GM12878 (cell line): ENCODE measurements at regions of chr3 and their contacts with region 1.

Region 1: DNA sequence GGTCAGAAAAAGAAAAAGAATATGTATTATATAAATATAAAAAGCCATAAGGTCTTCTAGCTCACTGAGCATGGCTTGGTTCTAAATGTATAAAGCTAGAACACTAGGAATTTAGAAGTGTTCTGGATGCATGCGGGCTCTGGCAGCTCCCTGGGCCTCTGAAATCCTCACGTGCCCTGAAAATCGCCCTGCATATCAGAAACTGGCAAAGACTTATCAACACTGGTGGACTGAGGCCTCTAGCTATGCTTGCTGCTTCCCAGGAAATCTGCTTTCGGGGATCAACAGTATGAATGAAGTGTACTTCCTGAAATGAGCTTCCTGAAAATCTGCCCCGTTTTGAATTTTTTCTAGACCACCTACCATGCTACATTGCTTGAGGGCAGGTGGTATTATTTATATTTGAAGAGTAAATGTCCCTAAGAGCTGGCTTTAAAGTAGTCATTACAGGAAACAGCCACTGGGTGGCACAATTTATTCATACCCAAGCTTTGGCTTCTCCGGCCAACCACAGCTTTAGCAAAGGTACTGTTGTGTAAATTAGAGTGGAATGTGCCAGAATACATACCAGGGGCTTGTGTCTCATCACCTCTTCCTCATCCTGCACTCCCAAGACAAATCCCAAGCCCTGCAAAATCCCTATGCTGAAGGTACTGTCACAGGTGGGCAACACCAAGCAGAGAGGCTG is 17.7 kb downstream of the CRTAP start:
- DNase-seq: no peak
- ATAC-seq: peak; percentile 92
- H3K4me3 ChIP-seq: no peak overlapping the region
- H3K27ac ChIP-seq: no peak overlapping the region
- H3K4me1 ChIP-seq: no peaks in the 10 kb centered on the region
- H3K27me3 ChIP-seq: no peaks in the 10 kb centered on the region
- CTCF ChIP-seq: peak; percentile 55 to 85 (median 72)
- EP300 ChIP-seq: no peak
- POLR2A ChIP-seq: no peak
- RAD21 ChIP-seq: peak; percentile 93

Region 2: GRCh38 chr3:33047842-33048834 is 83.3 kb before region 1 on chr3:
- CTCF ChIA-PET with region 1: no interaction called
- POLR2A ChIA-PET with region 1: no interaction called
- RAD21 ChIA-PET with region 1: no interaction called
- SMC1A ChIA-PET with region 1: no interaction called
- in situ Hi-C with region 1: no loop called
- intact Hi-C with region 1: no loop called
- DNase-seq: no peak
- ATAC-seq: peak; percentile 91
- H3K4me3 ChIP-seq: no peak overlapping the region
- H3K27ac ChIP-seq: peak overlapping the region; percentile 11
- H3K4me1 ChIP-seq: peaks cover 32% of the 10 kb centered on the region
- H3K27me3 ChIP-seq: no peaks in the 10 kb centered on the region
- CTCF ChIP-seq: no peak
- EP300 ChIP-seq: no peak
- POLR2A ChIP-seq: no peak
- RAD21 ChIP-seq: no peak

Region 3: GRCh38 chr3:33113772-33114621 is 17.5 kb before region 1 on chr3 and contains the start of gene CRTAP:
- CTCF ChIA-PET with region 1: interaction called, 36 read pairs
- POLR2A ChIA-PET with region 1: interaction called, 3 read pairs
- RAD21 ChIA-PET with region 1: interaction called, 5 read pairs
- SMC1A ChIA-PET with region 1: interaction called, 5 read pairs
- in situ Hi-C with region 1: no loop called
- intact Hi-C with region 1: no loop called
- DNase-seq: peak; percentile 45
- ATAC-seq: peak; percentile 92
- H3K4me3 ChIP-seq: peak within 1 kb of the TSS; percentile 75
- H3K27ac ChIP-seq: peak within 1 kb of the TSS; percentile 43
- H3K4me1 ChIP-seq: peaks cover 24% of the 10 kb centered on the region
- H3K27me3 ChIP-seq: no peaks in the 10 kb centered on the region
- CTCF ChIP-seq: no peak
- EP300 ChIP-seq: no peak
- POLR2A ChIP-seq: peak; percentile 87
- RAD21 ChIP-seq: no peak
- polyA plus RNA-seq, gene CRTAP: 6.0 to 6.2 TPM

Region 4: GRCh38 chr3:33250712-33251111 is 119.2 kb after region 1 on chr3:
- CTCF ChIA-PET with region 1: interaction called, 5 read pairs
- POLR2A ChIA-PET with region 1: no interaction called
- RAD21 ChIA-PET with region 1: interaction called, 5 read pairs
- SMC1A ChIA-PET with region 1: interaction called, 5 read pairs
- in situ Hi-C with region 1: no loop called
- intact Hi-C with region 1: loop called (anchors 1 kb)
- DNase-seq: no peak
- ATAC-seq: no peak
- H3K4me3 ChIP-seq: no peak overlapping the region
- H3K27ac ChIP-seq: no peak overlapping the region
- H3K4me1 ChIP-seq: no peaks in the 10 kb centered on the region
- H3K27me3 ChIP-seq: no peaks in the 10 kb centered on the region
- CTCF ChIP-seq: no peak
- EP300 ChIP-seq: no peak
- POLR2A ChIP-seq: no peak
- RAD21 ChIP-seq: no peak

Region 5: DNA sequence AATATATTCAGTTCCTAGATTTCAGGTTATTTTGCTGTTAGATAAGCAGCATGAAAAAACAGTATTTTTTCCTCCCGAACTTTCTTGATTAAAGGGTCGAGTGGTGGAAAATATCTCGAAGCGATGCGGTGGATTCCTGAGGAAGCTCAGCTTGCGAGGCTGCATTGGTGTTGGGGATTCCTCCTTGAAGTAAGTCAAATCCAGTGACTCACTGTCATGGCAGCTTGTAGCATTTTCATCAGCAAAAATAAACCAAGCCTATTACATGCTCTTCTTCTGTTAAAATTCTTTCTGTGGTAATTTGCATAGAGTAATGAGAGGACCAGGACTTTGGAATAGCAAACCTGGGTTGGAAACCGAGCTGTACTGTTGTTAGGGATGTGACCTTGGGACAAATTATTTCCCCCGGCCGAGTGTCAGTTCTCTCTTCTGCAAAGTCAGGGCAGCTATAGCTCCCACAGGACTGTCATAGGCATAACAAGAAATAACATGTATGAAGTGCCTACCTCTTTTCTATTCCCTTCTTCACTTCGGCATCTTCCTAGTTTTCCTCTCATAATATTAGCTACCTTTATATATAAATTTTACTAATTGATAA is 233.2 kb after region 1 on chr3:
- CTCF ChIA-PET with region 1: interaction called, 9 read pairs
- POLR2A ChIA-PET with region 1: no interaction called
- RAD21 ChIA-PET with region 1: interaction called, 6 read pairs
- SMC1A ChIA-PET with region 1: interaction called, 17 read pairs
- in situ Hi-C with region 1: no loop called
- intact Hi-C with region 1: no loop called
- DNase-seq: no peak
- ATAC-seq: no peak
- H3K4me3 ChIP-seq: no peak overlapping the region
- H3K27ac ChIP-seq: no peak overlapping the region
- H3K4me1 ChIP-seq: no peaks in the 10 kb centered on the region
- H3K27me3 ChIP-seq: no peaks in the 10 kb centered on the region
- CTCF ChIP-seq: no peak
- EP300 ChIP-seq: no peak
- POLR2A ChIP-seq: no peak
- RAD21 ChIP-seq: no peak

Region 6: DNA sequence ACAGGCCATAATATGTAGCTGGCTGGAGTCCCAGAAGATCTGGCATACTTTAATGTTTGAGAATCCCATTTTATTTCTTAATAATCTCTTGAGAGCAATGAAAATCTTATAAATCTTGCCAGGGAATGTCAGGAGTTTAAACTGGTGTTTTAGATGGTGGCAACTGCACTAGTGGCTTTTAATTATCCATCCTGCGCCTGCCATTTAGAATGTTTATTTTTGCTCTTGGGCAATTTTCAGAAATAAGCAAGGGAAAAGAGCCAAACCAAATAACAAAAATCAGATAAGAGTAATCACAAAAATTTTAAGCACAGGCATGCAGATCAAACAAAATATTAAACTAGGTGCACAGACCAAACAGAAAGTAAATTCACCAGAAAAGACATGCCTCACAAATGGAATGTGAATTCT is 350.6 kb after region 1 on chr3:
- CTCF ChIA-PET with region 1: no interaction called
- POLR2A ChIA-PET with region 1: no interaction called
- RAD21 ChIA-PET with region 1: no interaction called
- SMC1A ChIA-PET with region 1: no interaction called
- in situ Hi-C with region 1: no loop called
- intact Hi-C with region 1: no loop called
- DNase-seq: no peak
- ATAC-seq: no peak
- H3K4me3 ChIP-seq: no peak overlapping the region
- H3K27ac ChIP-seq: no peak overlapping the region
- H3K4me1 ChIP-seq: no peaks in the 10 kb centered on the region
- H3K27me3 ChIP-seq: no peaks in the 10 kb centered on the region
- CTCF ChIP-seq: no peak
- EP300 ChIP-seq: no peak
- POLR2A ChIP-seq: no peak
- RAD21 ChIP-seq: no peak

Region 7: GRCh38 chr3:33787328-33788009 is 656.0 kb after region 1 on chr3:
- CTCF ChIA-PET with region 1: interaction called, 41 read pairs
- POLR2A ChIA-PET with region 1: no interaction called
- RAD21 ChIA-PET with region 1: interaction called, 34 read pairs
- SMC1A ChIA-PET with region 1: interaction called, 24 read pairs
- in situ Hi-C with region 1: loop called (anchors 5 kb)
- intact Hi-C with region 1: loop called (anchors 1 kb)
- DNase-seq: no peak
- ATAC-seq: peak; percentile 93
- H3K4me3 ChIP-seq: peak overlapping the region; percentile 50; the same call in 1 of the 2 replicates
- H3K27ac ChIP-seq: no peak overlapping the region
- H3K4me1 ChIP-seq: peaks cover 4% of the 10 kb centered on the region; the same call in 1 of the 2 replicates
- H3K27me3 ChIP-seq: no peaks in the 10 kb centered on the region
- CTCF ChIP-seq: peak; percentile 75 to 89 (median 83)
- EP300 ChIP-seq: no peak
- POLR2A ChIP-seq: no peak
- RAD21 ChIP-seq: peak; percentile 86